GM12878 (cell line): ENCODE measurements at regions of chr20 and their contacts with region 1.

Region 1: DNA sequence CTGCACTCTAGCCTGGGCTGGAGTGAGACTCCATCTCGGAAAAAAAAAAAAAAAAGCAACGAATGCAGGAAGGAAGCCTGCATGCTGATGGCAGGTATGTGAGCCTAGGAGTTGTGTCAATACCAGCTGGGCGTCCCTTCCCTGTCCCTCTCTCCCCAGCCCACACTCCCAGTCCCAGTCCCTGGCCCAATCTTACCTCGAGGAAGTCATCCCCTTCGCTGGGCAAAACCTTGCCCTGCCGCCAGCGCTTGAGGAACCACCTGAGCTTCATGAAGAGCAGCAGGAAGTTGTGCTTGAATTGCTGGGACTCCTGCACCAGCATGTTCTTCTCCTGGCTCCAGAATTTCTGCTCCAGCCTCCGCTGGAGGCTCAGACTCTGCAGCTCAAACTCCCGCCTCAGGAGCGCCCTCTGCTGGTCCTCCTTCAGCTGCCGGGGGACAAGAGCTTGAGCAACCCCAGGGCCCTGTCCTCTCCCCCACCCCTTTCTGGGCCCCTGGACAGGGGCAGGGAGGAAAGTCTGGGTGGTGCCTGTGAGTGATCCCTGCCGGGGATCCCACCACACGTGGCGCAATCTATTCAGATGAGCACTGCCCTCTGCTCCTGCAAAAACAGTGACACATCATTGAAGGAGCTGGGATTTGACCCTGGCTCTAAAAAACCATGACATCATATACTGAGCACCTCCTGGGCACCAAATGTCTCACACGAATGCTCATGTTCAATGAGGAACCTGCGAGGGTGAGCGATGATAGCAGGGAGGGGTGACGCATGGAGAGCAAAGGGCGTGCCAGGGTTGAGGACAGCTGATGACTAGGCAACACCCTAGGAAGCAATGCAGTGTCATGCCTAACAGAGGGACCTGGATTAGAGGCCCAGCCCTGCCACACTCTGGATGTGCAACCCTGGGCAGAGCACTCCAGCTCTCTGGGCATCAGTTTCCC is 35.0 kb upstream of the DSN1 start:
- DNase-seq: no peak
- ATAC-seq: peak; percentile 88
- H3K4me3 ChIP-seq: no peak overlapping the region
- H3K27ac ChIP-seq: no peak overlapping the region
- H3K4me1 ChIP-seq: no peaks in the 10 kb centered on the region; the same call in 1 of the 2 replicates
- H3K27me3 ChIP-seq: no peaks in the 10 kb centered on the region
- CTCF ChIP-seq: peak; percentile 72 to 91 (median 85)
- EP300 ChIP-seq: no peak
- POLR2A ChIP-seq: no peak
- RAD21 ChIP-seq: peak; percentile 56

Region 2: DNA sequence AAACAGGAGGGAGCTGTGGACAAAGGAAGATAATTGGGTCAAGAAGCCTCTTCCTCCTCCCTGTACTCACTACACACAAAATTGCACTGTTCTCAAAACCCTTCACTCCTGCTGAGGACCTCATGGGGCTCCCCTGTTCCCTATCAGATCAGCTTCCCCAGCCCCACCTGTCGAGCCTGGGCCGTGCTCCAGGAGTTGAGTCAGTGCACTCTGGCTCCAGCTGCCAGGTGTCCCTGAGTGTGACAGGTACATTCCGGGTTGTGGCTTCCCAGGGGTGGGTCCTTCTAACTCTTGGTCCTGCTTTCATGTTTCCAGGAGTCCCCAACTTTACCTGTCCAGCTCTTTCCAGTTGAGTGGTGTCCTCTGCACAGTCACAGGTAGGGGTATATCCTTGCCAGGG is 194.6 kb before region 1 on chr20:
- CTCF ChIA-PET with region 1: interaction called, 10 read pairs
- POLR2A ChIA-PET with region 1: interaction called, 4 read pairs
- RAD21 ChIA-PET with region 1: interaction called, 9 read pairs
- SMC1A ChIA-PET with region 1: interaction called, 3 read pairs
- in situ Hi-C with region 1: no loop called
- intact Hi-C with region 1: no loop called
- DNase-seq: no peak
- ATAC-seq: no peak
- H3K4me3 ChIP-seq: no peak overlapping the region
- H3K27ac ChIP-seq: no peak overlapping the region
- H3K4me1 ChIP-seq: no peaks in the 10 kb centered on the region
- H3K27me3 ChIP-seq: no peaks in the 10 kb centered on the region
- CTCF ChIP-seq: no peak
- EP300 ChIP-seq: no peak
- POLR2A ChIP-seq: peak; percentile 35; the same call in 1 of the 2 replicates
- RAD21 ChIP-seq: no peak

Region 3: GRCh38 chr20:36754656-36755222 is 53.8 kb before region 1 on chr20:
- CTCF ChIA-PET with region 1: interaction called, 12 read pairs
- POLR2A ChIA-PET with region 1: no interaction called
- RAD21 ChIA-PET with region 1: interaction called, 5 read pairs
- SMC1A ChIA-PET with region 1: interaction called, 3 read pairs
- in situ Hi-C with region 1: no loop called
- intact Hi-C with region 1: no loop called
- DNase-seq: no peak
- ATAC-seq: peak; percentile 85
- H3K4me3 ChIP-seq: no peak overlapping the region
- H3K27ac ChIP-seq: 0 out of 2 replicates have a peak overlapping the region, but pooled peaks have one; percentile 20
- H3K4me1 ChIP-seq: peaks cover 13% of the 10 kb centered on the region
- H3K27me3 ChIP-seq: no peaks in the 10 kb centered on the region
- CTCF ChIP-seq: peak; percentile 77 to 81 (median 79)
- EP300 ChIP-seq: no peak
- POLR2A ChIP-seq: no peak
- RAD21 ChIP-seq: peak; percentile 76

Region 4: DNA sequence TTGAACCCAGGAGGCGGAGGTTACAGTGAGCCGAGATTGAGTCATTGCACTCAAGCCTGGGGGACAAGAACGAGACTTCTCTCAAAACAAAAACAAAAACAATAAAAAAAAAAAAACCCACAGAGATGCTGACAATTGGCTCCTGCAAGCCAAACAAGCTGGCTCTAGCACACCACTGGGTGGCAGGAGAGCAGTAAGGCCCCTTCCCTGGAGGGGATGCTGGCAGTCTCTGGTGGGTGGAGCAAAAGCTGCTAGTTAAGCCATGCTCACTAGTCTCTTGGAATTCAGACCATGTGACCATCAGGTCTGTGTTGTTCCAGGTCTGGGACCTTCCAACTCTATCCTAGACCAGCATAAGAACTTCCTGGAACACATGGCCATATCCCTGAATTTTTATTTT is 16.2 kb before region 1 on chr20:
- CTCF ChIA-PET with region 1: interaction called, 26 read pairs
- POLR2A ChIA-PET with region 1: interaction called, 3 read pairs
- RAD21 ChIA-PET with region 1: interaction called, 3 read pairs
- SMC1A ChIA-PET with region 1: interaction called, 4 read pairs
- in situ Hi-C with region 1: no loop called
- intact Hi-C with region 1: no loop called
- DNase-seq: no peak
- ATAC-seq: peak; percentile 87
- H3K4me3 ChIP-seq: no peak overlapping the region
- H3K27ac ChIP-seq: no peak overlapping the region
- H3K4me1 ChIP-seq: peaks cover 7% of the 10 kb centered on the region; the same call in 1 of the 2 replicates
- H3K27me3 ChIP-seq: no peaks in the 10 kb centered on the region
- CTCF ChIP-seq: peak; percentile 36 to 49 (median 47); a peak in 5 of 6 replicates
- EP300 ChIP-seq: no peak
- POLR2A ChIP-seq: no peak
- RAD21 ChIP-seq: peak; percentile 57

Region 5: GRCh38 chr20:36827474-36827873 is 18.9 kb after region 1 on chr20:
- CTCF ChIA-PET with region 1: interaction called, 48 read pairs
- POLR2A ChIA-PET with region 1: interaction called, 3 read pairs
- RAD21 ChIA-PET with region 1: interaction called, 4 read pairs
- SMC1A ChIA-PET with region 1: no interaction called
- in situ Hi-C with region 1: no loop called
- intact Hi-C with region 1: no loop called
- DNase-seq: peak; percentile 74
- ATAC-seq: peak; percentile 98
- H3K4me3 ChIP-seq: no peak overlapping the region
- H3K27ac ChIP-seq: peak overlapping the region; percentile 75
- H3K4me1 ChIP-seq: peaks cover 13% of the 10 kb centered on the region
- H3K27me3 ChIP-seq: no peaks in the 10 kb centered on the region
- CTCF ChIP-seq: no peak
- EP300 ChIP-seq: no peak
- POLR2A ChIP-seq: peak; percentile 48; the same call in 1 of the 2 replicates
- RAD21 ChIP-seq: no peak

Region 6: GRCh38 chr20:36881888-36882287 is 73.3 kb after region 1 on chr20:
- CTCF ChIA-PET with region 1: interaction called, 46 read pairs
- POLR2A ChIA-PET with region 1: no interaction called
- RAD21 ChIA-PET with region 1: interaction called, 20 read pairs
- SMC1A ChIA-PET with region 1: interaction called, 12 read pairs
- in situ Hi-C with region 1: no loop called
- intact Hi-C with region 1: loop called (anchors 5 kb)
- DNase-seq: no peak
- ATAC-seq: peak; percentile 93
- H3K4me3 ChIP-seq: no peak overlapping the region
- H3K27ac ChIP-seq: no peak overlapping the region
- H3K4me1 ChIP-seq: peaks cover 7% of the 10 kb centered on the region
- H3K27me3 ChIP-seq: no peaks in the 10 kb centered on the region; a peak in 1 of 4 replicates
- CTCF ChIP-seq: no peak
- EP300 ChIP-seq: no peak
- POLR2A ChIP-seq: no peak
- RAD21 ChIP-seq: no peak

Region 7: DNA sequence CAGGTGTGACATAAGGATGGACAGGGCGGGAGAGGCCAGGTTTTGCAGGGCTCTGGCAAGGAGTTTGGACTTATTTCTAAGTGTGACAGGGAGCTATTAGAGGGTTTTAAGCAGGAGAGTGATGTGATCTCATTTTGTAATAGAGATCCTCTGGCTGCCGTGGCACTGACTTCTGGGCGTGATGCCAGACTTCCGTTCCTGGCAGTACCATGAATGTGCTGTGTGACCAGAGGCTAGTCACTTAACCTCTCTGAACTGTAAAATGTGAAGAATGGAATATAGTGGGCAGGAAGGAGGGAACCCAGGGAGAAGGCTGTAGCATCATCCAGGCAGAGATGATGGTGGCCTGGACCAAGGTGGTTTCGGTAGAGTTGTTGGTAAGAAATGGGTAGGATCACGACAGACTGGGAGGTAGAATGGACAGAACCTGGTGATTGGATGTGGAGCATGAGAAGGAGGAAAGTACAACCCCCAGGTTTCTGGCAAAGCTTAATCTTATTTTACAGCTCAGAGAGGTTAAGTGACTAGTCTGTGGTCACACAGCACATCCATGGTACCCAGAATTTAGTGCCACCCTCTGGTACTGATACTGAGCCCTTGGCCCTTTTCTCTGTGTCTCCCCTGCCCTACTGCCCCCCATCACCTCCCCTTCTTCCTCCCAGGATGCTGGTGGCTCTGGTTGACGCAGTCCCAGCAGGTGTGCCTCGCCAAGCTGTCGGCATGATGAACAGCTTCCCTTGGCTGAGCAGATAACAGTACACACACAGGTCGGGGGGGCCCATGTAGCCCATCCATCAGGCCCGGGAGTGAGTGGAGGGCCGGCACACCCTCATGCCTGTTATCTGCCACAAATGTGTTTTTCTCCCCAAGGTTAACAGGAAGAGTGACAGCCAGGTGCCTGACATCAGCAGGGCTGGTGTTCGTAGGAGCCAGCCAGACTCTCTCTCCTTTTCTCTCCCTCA is 832.3 kb after region 1 on chr20:
- CTCF ChIA-PET with region 1: no interaction called
- POLR2A ChIA-PET with region 1: no interaction called
- RAD21 ChIA-PET with region 1: no interaction called
- SMC1A ChIA-PET with region 1: no interaction called
- in situ Hi-C with region 1: no loop called
- intact Hi-C with region 1: no loop called
- DNase-seq: no peak
- ATAC-seq: no peak
- H3K4me3 ChIP-seq: no peak overlapping the region
- H3K27ac ChIP-seq: no peak overlapping the region
- H3K4me1 ChIP-seq: no peaks in the 10 kb centered on the region
- H3K27me3 ChIP-seq: peaks cover 2 to 13% of the 10 kb centered on the region in 2 experiments; a peak in 3 of 4 replicates
- CTCF ChIP-seq: no peak
- EP300 ChIP-seq: no peak
- POLR2A ChIP-seq: no peak
- RAD21 ChIP-seq: no peak